MCF 10A (cell line): ENCODE measurements at regions of chr21 and their contacts with region 1.

Region 1: DNA sequence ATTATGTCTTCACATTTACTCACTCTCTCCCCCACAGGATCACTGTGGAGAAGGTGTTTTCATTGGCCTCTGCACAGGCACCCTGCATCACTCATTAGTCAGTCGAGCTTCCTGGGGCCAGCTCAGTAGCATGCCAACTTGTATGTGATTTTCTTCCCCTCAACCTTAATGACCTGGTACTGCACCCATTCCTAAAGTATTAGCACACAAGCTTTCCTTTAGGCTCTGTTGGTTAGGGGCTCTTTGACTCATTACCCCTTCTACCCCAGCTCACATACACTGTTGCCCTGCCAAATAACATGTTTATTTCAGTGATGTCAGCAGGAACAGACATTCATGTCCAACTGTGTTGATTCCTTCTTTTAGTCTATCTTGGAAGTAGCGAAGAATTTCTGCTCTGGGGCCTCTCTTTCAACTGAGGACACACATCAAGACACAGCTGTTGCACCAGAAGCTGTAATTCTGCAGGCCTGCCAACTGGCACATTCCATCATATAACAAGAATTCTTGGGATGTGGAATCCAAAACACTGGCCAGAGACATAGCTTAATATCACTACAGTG is 603.5 kb upstream of the ADAMTS5 start:
- DNase-seq: peak; percentile 83
- H3K4me3 Mint-ChIP-seq: no peak overlapping the region
- H3K27ac Mint-ChIP-seq: peak overlapping the region; percentile 85
- H3K4me1 Mint-ChIP-seq: peaks cover 37% of the 10 kb centered on the region
- H3K27me3 Mint-ChIP-seq: no peaks in the 10 kb centered on the region
- CTCF ChIP-seq: no peak

Region 2: GRCh38 chr21:27233514-27234115 is 336.8 kb before region 1 on chr21:
- CTCF ChIA-PET with region 1: no interaction called
- POLR2A ChIA-PET with region 1: no interaction called
- intact Hi-C with region 1: no loop called
- DNase-seq: no peak
- H3K4me3 Mint-ChIP-seq: no peak overlapping the region
- H3K27ac Mint-ChIP-seq: no peak overlapping the region
- H3K4me1 Mint-ChIP-seq: no peaks in the 10 kb centered on the region
- H3K27me3 Mint-ChIP-seq: no peaks in the 10 kb centered on the region
- CTCF ChIP-seq: no peak

Region 3: GRCh38 chr21:27246741-27247140 is 323.6 kb before region 1 on chr21:
- CTCF ChIA-PET with region 1: no interaction called
- POLR2A ChIA-PET with region 1: no interaction called
- intact Hi-C with region 1: no loop called
- DNase-seq: peak; percentile 17
- H3K4me3 Mint-ChIP-seq: no peak overlapping the region
- H3K27ac Mint-ChIP-seq: no peak overlapping the region
- H3K4me1 Mint-ChIP-seq: peaks cover 5% of the 10 kb centered on the region
- H3K27me3 Mint-ChIP-seq: no peaks in the 10 kb centered on the region
- CTCF ChIP-seq: no peak

Region 4: GRCh38 chr21:27519361-27519760 is 51.0 kb before region 1 on chr21:
- CTCF ChIA-PET with region 1: no interaction called
- POLR2A ChIA-PET with region 1: no interaction called
- intact Hi-C with region 1: no loop called
- DNase-seq: no peak
- H3K4me3 Mint-ChIP-seq: no peak overlapping the region
- H3K27ac Mint-ChIP-seq: no peak overlapping the region
- H3K4me1 Mint-ChIP-seq: no peaks in the 10 kb centered on the region
- H3K27me3 Mint-ChIP-seq: no peaks in the 10 kb centered on the region
- CTCF ChIP-seq: no peak

Region 5: GRCh38 chr21:27590271-27590670 is 19.9 kb after region 1 on chr21:
- CTCF ChIA-PET with region 1: no interaction called
- POLR2A ChIA-PET with region 1: no interaction called
- intact Hi-C with region 1: no loop called
- DNase-seq: no peak
- H3K4me3 Mint-ChIP-seq: no peak overlapping the region
- H3K27ac Mint-ChIP-seq: no peak overlapping the region
- H3K4me1 Mint-ChIP-seq: no peaks in the 10 kb centered on the region
- H3K27me3 Mint-ChIP-seq: no peaks in the 10 kb centered on the region
- CTCF ChIP-seq: no peak

Region 6: DNA sequence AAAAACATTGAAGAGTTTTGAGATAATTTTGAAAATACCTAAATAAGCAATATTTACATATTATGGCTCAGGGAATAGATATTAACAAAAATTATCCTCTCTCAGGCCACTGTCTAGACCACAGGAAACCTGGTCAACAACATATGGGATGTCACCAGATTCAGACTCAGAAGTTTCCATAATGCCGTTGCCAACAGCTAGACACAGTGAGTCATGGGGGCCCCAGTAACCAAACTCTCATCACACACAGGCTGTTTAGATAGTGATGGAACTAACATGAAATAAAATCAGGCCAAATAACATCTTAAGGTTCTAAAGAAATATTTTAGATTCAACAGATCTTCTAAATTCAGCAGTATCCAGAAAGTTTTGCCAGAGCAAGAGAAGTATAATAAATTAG is 78.2 kb after region 1 on chr21:
- CTCF ChIA-PET with region 1: no interaction called
- POLR2A ChIA-PET with region 1: no interaction called
- intact Hi-C with region 1: loop called (anchors 2 kb)
- DNase-seq: peak; percentile 59
- H3K4me3 Mint-ChIP-seq: no peak overlapping the region
- H3K27ac Mint-ChIP-seq: peak overlapping the region; percentile 70
- H3K4me1 Mint-ChIP-seq: peaks cover 12% of the 10 kb centered on the region
- H3K27me3 Mint-ChIP-seq: no peaks in the 10 kb centered on the region
- CTCF ChIP-seq: no peak

Region 7: DNA sequence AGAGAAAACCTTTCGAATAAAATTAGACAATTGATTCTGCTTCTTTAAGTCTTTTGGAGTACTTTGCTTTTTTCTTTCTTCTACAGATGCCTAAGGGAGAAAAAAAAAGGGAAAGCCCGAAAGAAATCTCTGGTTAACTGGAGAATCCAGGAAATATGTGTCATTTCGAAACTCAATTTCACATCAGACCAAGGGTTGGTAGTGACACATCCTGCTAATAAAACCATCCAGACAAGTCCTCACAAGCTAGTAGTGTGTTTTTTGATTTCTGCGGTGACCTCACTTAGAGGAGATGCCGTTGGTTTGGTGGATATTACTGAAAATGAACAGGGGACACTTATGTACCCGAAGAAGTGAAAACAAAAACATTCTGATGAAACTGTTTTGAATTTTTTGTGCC is 123.0 kb after region 1 on chr21:
- CTCF ChIA-PET with region 1: interaction called, 8 read pairs
- POLR2A ChIA-PET with region 1: interaction called, 3 read pairs
- intact Hi-C with region 1: loop called (anchors 2 kb)
- DNase-seq: peak; percentile 84
- H3K4me3 Mint-ChIP-seq: peak overlapping the region; percentile 45
- H3K27ac Mint-ChIP-seq: peak overlapping the region; percentile 75
- H3K4me1 Mint-ChIP-seq: peaks cover 19% of the 10 kb centered on the region
- H3K27me3 Mint-ChIP-seq: no peaks in the 10 kb centered on the region
- CTCF ChIP-seq: no peak